Naive thymus-derived CD4-positive, alpha-beta T cell (primary cell): ENCODE measurements at regions of chr11 and their contacts with region 1.

Region 1: GRCh38 chr11:34174412-34175041 is 69.1 kb downstream of the NAT10 start:
- DNase-seq: peak; percentile 60 to 83 (median 73)
- ATAC-seq: peak; percentile 99
- H3K4me3 ChIP-seq: no peak overlapping the region
- H3K4me3 Mint-ChIP-seq: peak overlapping the region; percentile 21 to 81 (median 67)
- H3K27ac ChIP-seq: no peak overlapping the region
- H3K27ac Mint-ChIP-seq: no peak overlapping the region
- H3K4me1 ChIP-seq: peaks cover 0 to 4% of the 10 kb centered on the region in 2 donors
- H3K4me1 Mint-ChIP-seq: peaks cover 0 to 21% (median 4%) of the 10 kb centered on the region in 7 donors
- H3K27me3 ChIP-seq: no peaks in the 10 kb centered on the region
- H3K27me3 Mint-ChIP-seq: peaks cover 0 to 6% (median 0%) of the 10 kb centered on the region in 5 donors

Region 2: GRCh38 chr11:33996498-33997454 is 177.8 kb before region 1 on chr11:
- CTCF ChIA-PET with region 1: interaction called, 5 read pairs
- POLR2A ChIA-PET with region 1: no interaction called
- intact Hi-C with region 1: loop called (anchors 1 to 2 kb)
- DNase-seq: peak; percentile 42 to 79 (median 71)
- ATAC-seq: peak; percentile 99
- H3K4me3 ChIP-seq: no peak overlapping the region
- H3K4me3 Mint-ChIP-seq: peak overlapping the region in 7 of 10 donors; percentile 31 to 74 (median 59)
- H3K27ac ChIP-seq: no peak overlapping the region
- H3K27ac Mint-ChIP-seq: no peak overlapping the region
- H3K4me1 ChIP-seq: peaks cover 0 to 3% of the 10 kb centered on the region in 2 donors
- H3K4me1 Mint-ChIP-seq: peaks cover 0 to 10% (median 9%) of the 10 kb centered on the region in 7 donors
- H3K27me3 ChIP-seq: peaks cover 0 to 5% of the 10 kb centered on the region in 2 donors
- H3K27me3 Mint-ChIP-seq: peaks cover 12 to 33% (median 18%) of the 10 kb centered on the region in 5 donors

Region 3: DNA sequence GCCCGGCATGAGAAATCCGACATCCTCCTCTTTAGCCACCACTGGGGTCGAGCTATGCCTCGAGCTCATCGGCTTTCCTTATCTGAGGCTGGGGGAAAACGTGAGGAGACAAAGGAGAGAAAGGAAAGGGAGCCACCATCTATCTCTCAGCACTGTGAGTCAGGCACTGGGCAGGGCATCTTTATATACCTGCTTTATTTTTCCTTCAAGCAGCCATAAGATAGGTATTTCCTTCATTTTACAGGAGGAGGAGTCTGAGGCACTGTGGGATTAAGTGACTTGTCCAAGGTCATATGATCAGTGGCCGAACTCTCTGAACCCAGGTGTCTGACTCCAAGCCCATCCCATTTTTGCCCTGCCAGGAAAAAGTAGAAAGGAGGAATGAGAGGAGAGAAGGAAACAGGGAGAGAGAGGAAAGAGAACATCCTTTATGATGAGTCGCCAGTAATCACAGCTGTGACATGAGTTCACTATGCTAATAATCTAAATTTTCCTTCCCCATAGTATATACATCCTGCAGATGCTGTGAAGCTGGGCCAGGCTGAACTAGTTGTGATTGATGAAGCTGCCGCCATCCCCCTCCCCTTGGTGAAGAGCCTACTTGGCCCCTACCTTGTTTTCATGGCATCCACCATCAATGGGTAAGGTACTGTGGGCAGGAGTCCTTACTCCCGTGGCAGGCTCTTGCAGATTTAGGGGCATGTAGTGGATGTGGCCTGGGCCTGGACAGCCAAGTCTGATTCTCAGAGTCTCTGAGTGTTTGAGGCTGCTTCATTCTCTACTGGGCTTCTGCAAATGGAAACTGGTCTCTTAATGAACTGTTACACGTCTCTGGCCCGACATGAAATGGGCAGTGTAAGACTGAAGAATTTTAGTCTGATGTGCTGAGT is 47.3 kb before region 1 on chr11:
- CTCF ChIA-PET with region 1: no interaction called
- POLR2A ChIA-PET with region 1: no interaction called
- intact Hi-C with region 1: no loop called
- DNase-seq: no peak
- ATAC-seq: no peak
- H3K4me3 ChIP-seq: no peak overlapping the region
- H3K4me3 Mint-ChIP-seq: no peak overlapping the region
- H3K27ac ChIP-seq: no peak overlapping the region
- H3K27ac Mint-ChIP-seq: peak overlapping the region in 1 of 9 donors; percentile 48
- H3K4me1 ChIP-seq: no peaks in the 10 kb centered on the region
- H3K4me1 Mint-ChIP-seq: peaks cover 0 to 3% (median 0%) of the 10 kb centered on the region in 7 donors
- H3K27me3 ChIP-seq: no peaks in the 10 kb centered on the region
- H3K27me3 Mint-ChIP-seq: no peaks in the 10 kb centered on the region

Region 4: DNA sequence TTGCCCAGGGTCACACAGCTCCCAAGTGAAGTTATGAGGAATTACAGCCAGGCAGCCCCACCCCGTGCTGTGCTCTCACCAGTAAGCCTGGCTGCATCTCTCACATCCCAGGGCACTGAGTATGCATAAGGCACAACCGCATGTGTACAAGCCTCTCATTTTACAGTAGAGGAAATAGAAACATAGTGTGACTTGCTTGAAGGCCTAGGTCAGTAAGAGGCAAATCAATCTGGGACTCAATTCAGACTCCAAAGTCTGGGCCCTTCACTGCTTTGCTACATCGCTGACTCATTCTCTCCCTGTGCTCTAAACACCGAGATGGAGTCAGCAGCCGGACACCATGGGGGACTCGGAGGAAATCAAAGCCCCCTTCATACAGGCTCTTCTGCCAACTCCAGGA is 175.4 kb after region 1 on chr11:
- CTCF ChIA-PET with region 1: interaction called, 11 read pairs
- POLR2A ChIA-PET with region 1: no interaction called
- intact Hi-C with region 1: no loop called
- DNase-seq: no peak
- ATAC-seq: no peak
- H3K4me3 ChIP-seq: no peak overlapping the region
- H3K4me3 Mint-ChIP-seq: no peak overlapping the region
- H3K27ac ChIP-seq: no peak overlapping the region
- H3K27ac Mint-ChIP-seq: no peak overlapping the region
- H3K4me1 ChIP-seq: no peaks in the 10 kb centered on the region
- H3K4me1 Mint-ChIP-seq: peaks cover 0 to 8% (median 0%) of the 10 kb centered on the region in 7 donors
- H3K27me3 ChIP-seq: peaks cover 0 to 3% of the 10 kb centered on the region in 2 donors
- H3K27me3 Mint-ChIP-seq: peaks cover 9 to 38% (median 28%) of the 10 kb centered on the region in 5 donors

Region 5: GRCh38 chr11:34438529-34439507 is 264.3 kb after region 1 on chr11 and contains the start of gene CAT:
- CTCF ChIA-PET with region 1: interaction called, 6 read pairs
- POLR2A ChIA-PET with region 1: no interaction called
- intact Hi-C with region 1: loop called in 1 of 2 experiments (anchors 1 kb)
- DNase-seq: peak; percentile 94 to 98 (median 97)
- ATAC-seq: peak; percentile 98
- H3K4me3 ChIP-seq: peak within 1 kb of the TSS; percentile 90
- H3K4me3 Mint-ChIP-seq: peak within 1 kb of the TSS; percentile 88 to 98 (median 96)
- H3K27ac ChIP-seq: peak within 1 kb of the TSS; percentile 79
- H3K27ac Mint-ChIP-seq: peak within 1 kb of the TSS; percentile 89 to 97 (median 93)
- H3K4me1 ChIP-seq: peaks cover 7 to 19% of the 10 kb centered on the region in 2 donors
- H3K4me1 Mint-ChIP-seq: peaks cover 21 to 47% (median 35%) of the 10 kb centered on the region in 7 donors
- H3K27me3 ChIP-seq: no peaks in the 10 kb centered on the region
- H3K27me3 Mint-ChIP-seq: no peaks in the 10 kb centered on the region
- total RNA-seq, gene CAT: 23.3 to 55.9 (median 42.6) TPM

Region 6: GRCh38 chr11:34492806-34493414 is 318.4 kb after region 1 on chr11:
- CTCF ChIA-PET with region 1: interaction called, 4 read pairs
- POLR2A ChIA-PET with region 1: no interaction called
- intact Hi-C with region 1: loop called in 1 of 2 experiments (anchors 2 kb)
- DNase-seq: peak in 3 of 9 donors; percentile 7 to 19 (median 14)
- ATAC-seq: peak; percentile 38
- H3K4me3 ChIP-seq: no peak overlapping the region
- H3K4me3 Mint-ChIP-seq: no peak overlapping the region
- H3K27ac ChIP-seq: no peak overlapping the region
- H3K27ac Mint-ChIP-seq: no peak overlapping the region
- H3K4me1 ChIP-seq: no peaks in the 10 kb centered on the region
- H3K4me1 Mint-ChIP-seq: peaks cover 0 to 3% (median 0%) of the 10 kb centered on the region in 7 donors
- H3K27me3 ChIP-seq: no peaks in the 10 kb centered on the region
- H3K27me3 Mint-ChIP-seq: peaks cover 0 to 10% (median 3%) of the 10 kb centered on the region in 5 donors